Heart left ventricle (tissue), 16 donors: ENCODE measurements at regions of chr2 and their contacts with region 1.

Region 1: GRCh38 chr2:168961450-168962229 is 60.5 kb downstream of the G6PC2 start:
- DNase-seq: peak in 2 of 5 donors; percentile 15 to 21
- ATAC-seq: peak; percentile 62 to 88 (median 78)
- H3K4me3 ChIP-seq: no peak overlapping the region
- H3K27ac ChIP-seq: no peak overlapping the region
- H3K4me1 ChIP-seq: peaks cover 0 to 10% (median 0%) of the 10 kb centered on the region in 12 donors
- H3K27me3 ChIP-seq: no peaks in the 10 kb centered on the region
- CTCF ChIP-seq: peak; percentile 72 to 86 (median 80)
- POLR2A ChIP-seq: no peak

Region 2: DNA sequence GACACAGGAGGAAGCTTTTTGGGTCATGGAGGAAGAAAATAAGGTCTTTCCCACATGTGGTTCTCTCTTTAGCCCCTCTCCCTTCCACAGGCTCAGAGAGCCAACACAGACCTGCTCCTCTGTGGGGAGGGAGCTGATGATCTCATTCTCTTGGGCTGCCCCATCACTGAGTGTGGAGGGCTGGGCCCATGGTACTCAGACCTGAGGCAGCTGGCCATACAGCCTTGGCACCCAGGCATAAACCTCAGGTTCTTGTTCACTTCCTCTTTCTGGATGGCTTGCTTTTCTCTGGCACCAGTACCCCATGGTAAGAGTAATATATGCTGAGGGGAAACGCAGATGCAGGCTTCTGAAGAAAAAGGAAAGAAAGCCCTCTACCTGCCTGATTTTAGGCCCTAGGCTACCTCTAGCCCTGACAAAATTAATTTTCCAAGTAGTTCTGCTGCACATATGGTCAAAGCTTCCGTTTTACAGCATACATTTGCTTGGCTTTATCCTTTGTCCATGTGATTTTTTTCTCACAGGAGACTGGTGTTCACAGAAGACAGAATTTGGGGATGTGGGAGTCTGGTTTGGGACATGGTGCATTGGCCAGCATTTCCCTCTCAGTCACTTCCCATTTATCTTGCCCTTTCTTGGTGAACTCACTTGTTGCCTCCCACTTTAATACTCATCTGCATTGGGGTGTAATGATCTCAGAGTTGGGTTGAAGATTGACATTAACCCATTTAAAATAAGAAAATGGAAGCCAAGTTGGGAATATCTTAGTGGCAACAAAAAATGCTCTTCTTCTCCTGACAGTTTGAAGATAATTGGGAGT is 118.8 kb after region 1 on chr2:
- intact Hi-C with region 1: loop called in 1 of 10 experiments (anchors 10 kb)
- DNase-seq: no peak
- ATAC-seq: peak in 2 of 4 donors; percentile 26 to 48
- H3K4me3 ChIP-seq: no peak overlapping the region
- H3K27ac ChIP-seq: peak overlapping the region in 1 of 12 donors; percentile 57
- H3K4me1 ChIP-seq: peaks cover 0 to 57% (median 9%) of the 10 kb centered on the region in 12 donors
- H3K27me3 ChIP-seq: no peaks in the 10 kb centered on the region
- CTCF ChIP-seq: no peak
- POLR2A ChIP-seq: no peak

Region 3: GRCh38 chr2:169109502-169110409 is 148.1 kb after region 1 on chr2:
- intact Hi-C with region 1: loop called in 4 of 10 experiments (anchors 10 kb)
- DNase-seq: peak; percentile 63 to 81 (median 73)
- ATAC-seq: peak; percentile 75 to 92 (median 84)
- H3K4me3 ChIP-seq: no peak overlapping the region
- H3K27ac ChIP-seq: no peak overlapping the region
- H3K4me1 ChIP-seq: peaks cover 0 to 49% (median 0%) of the 10 kb centered on the region in 12 donors
- H3K27me3 ChIP-seq: no peaks in the 10 kb centered on the region
- CTCF ChIP-seq: peak; percentile 67 to 90 (median 80)
- POLR2A ChIP-seq: no peak

Region 4: GRCh38 chr2:169131587-169132512 is 170.2 kb after region 1 on chr2:
- intact Hi-C with region 1: loop called in 5 of 10 experiments (anchors 2 to 5 kb)
- DNase-seq: no peak
- ATAC-seq: peak in 2 of 4 donors; percentile 20 to 45
- H3K4me3 ChIP-seq: no peak overlapping the region
- H3K27ac ChIP-seq: no peak overlapping the region
- H3K4me1 ChIP-seq: peaks cover 0 to 7% (median 0%) of the 10 kb centered on the region in 12 donors
- H3K27me3 ChIP-seq: no peaks in the 10 kb centered on the region
- CTCF ChIP-seq: peak; percentile 71 to 90 (median 82)
- POLR2A ChIP-seq: no peak

Region 5: DNA sequence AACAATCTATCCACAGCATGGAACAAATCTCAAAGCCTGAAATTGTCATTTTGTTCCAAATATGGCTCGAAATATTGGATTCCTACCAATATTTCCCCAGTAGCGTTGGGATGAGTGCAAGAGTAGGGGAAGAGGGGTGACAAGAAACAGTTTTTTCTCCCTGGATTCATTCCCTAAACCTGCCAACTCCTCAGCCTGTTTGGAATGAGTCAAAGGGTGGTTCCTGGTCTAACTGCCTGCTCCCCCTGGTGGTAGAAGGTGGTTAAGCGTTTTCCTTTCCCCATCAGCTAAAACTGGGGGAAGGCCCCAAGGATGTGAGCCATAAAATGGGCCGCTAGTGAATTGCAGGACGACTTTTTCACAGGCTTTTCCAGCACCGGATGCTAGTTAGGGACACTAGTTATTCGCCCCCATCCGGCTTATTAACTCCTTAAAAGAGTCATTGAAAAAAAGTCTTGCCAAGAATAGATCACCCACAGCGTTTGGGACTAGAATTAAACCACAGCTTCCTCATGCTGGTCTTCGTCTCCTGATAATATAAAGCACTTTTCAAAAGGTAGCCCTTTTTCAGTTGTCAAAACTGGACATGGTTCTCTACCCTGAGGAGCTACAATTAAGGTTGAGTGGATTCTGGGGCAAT is 180.2 kb after region 1 on chr2:
- intact Hi-C with region 1: loop called in 5 of 10 experiments (anchors 5 kb)
- DNase-seq: peak in 4 of 5 donors; percentile 30 to 41 (median 34)
- ATAC-seq: peak in 3 of 4 donors; percentile 32 to 49 (median 38)
- H3K4me3 ChIP-seq: no peak overlapping the region
- H3K27ac ChIP-seq: no peak overlapping the region
- H3K4me1 ChIP-seq: peaks cover 0 to 8% (median 0%) of the 10 kb centered on the region in 12 donors
- H3K27me3 ChIP-seq: no peaks in the 10 kb centered on the region
- CTCF ChIP-seq: peak; percentile 54 to 84 (median 68)
- POLR2A ChIP-seq: no peak

Region 6: GRCh38 chr2:169221745-169222369 is 260.2 kb after region 1 on chr2:
- intact Hi-C with region 1: loop called in 8 of 10 experiments (anchors 5 to 10 kb)
- DNase-seq: no peak
- ATAC-seq: no peak
- H3K4me3 ChIP-seq: no peak overlapping the region
- H3K27ac ChIP-seq: no peak overlapping the region
- H3K4me1 ChIP-seq: no peaks in the 10 kb centered on the region
- H3K27me3 ChIP-seq: no peaks in the 10 kb centered on the region
- CTCF ChIP-seq: peak in 8 of 12 donors; percentile 20 to 50 (median 34)
- POLR2A ChIP-seq: no peak

Region 7: DNA sequence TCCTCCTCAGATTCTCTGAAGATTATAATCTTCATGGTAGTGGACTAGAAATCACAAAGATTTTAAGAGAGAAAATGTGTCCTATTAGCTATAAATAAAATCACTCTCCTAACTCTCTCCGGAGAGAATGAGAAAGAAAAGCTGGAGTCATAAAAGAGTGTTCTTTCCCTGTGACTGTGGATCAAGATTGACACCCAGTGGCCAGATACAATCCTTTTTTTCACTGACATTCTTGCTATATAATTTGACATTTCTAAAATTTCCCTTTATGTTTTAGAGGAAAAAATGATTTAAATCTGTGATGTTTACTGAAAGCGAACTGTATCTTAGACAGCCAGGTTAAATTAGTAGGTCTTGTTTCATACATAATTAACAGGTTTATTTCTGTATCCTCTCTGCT is 436.1 kb after region 1 on chr2:
- intact Hi-C with region 1: loop called in 2 of 10 experiments (anchors 10 kb)
- DNase-seq: no peak
- ATAC-seq: no peak
- H3K4me3 ChIP-seq: no peak overlapping the region
- H3K27ac ChIP-seq: no peak overlapping the region
- H3K4me1 ChIP-seq: no peaks in the 10 kb centered on the region
- H3K27me3 ChIP-seq: peaks cover 0 to 5% (median 0%) of the 10 kb centered on the region in 9 donors
- CTCF ChIP-seq: peak in 6 of 12 donors; percentile 10 to 31 (median 25)
- POLR2A ChIP-seq: no peak